ENCODE measurements at regions of chr18 and their contacts with region 1.

Region 1: GRCh38 chr18:80034068-80034851 is at the start of gene RBFA:
- DNase-seq: peak; percentile 100
- ATAC-seq: peak; percentile 98
- H3K4me3 ChIP-seq: peak within 1 kb of the TSS; percentile 83 to 94
- H3K27ac ChIP-seq: peak within 1 kb of the TSS in 1 of 2 donors; percentile 34
- H3K4me1 ChIP-seq: no peaks in the 10 kb centered on the region
- H3K27me3 ChIP-seq: no peaks in the 10 kb centered on the region
- total RNA-seq, gene RBFA: 18.1 to 22.8 TPM

Region 2: GRCh38 chr18:79679111-79679872 is 355.0 kb before region 1 on chr18 and contains the start of gene CTDP1:
- intact Hi-C with region 1: loop called in 1 of 2 experiments (anchors 10 kb)
- DNase-seq: peak; percentile 99 to 100
- ATAC-seq: peak; percentile 99
- H3K4me3 ChIP-seq: peak within 1 kb of the TSS; percentile 84 to 95
- H3K27ac ChIP-seq: peak within 1 kb of the TSS; percentile 87 to 98
- H3K4me1 ChIP-seq: no peaks in the 10 kb centered on the region
- H3K27me3 ChIP-seq: no peaks in the 10 kb centered on the region
- total RNA-seq, gene CTDP1: 18.5 to 19.8 TPM

Region 3: DNA sequence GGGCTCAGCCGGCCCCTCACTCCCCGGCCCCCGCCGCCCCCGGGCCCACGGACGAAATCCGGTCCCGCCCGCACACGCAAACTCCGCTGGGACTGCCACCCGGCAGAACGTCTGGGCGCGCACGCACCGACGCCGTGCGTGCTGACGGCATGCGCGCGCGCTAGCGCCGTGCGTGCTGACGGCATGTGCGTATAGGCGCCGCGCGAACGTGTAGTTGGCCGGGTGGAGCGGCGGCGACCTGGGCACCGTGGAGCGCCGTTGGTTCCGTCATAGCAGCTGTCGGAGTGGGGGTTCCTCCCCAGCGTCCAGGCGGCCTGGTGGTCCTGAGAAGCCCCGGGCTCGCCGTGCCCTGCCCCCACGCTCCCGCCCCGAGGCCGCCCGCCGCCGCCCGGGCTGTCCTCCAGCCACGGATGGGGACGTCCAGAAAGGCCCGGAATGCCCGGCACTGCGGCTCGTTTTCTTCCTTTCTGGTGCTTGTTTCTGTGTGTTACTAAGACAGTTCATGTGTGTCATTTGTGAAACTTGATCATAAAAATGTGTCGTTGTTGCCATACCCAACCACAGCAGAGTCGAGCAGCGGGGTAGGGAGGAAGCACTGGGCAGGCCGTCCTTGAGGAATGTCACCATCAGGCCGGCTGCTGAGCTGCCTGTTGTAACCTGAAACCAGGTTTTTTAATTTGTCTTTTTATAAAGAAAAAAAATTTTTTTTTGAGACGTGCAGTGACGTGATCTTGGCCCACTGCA is 45.6 kb before region 1 on chr18 and contains the start of gene TXNL4A:
- intact Hi-C with region 1: loop called (anchors 1 to 5 kb)
- DNase-seq: peak; percentile 93 to 94
- ATAC-seq: peak; percentile 98
- H3K4me3 ChIP-seq: peak within 1 kb of the TSS; percentile 61 to 69
- H3K27ac ChIP-seq: peak within 1 kb of the TSS; percentile 46 to 87
- H3K4me1 ChIP-seq: no peaks in the 10 kb centered on the region
- H3K27me3 ChIP-seq: no peaks in the 10 kb centered on the region
- total RNA-seq, gene TXNL4A: 71.7 to 72.0 TPM

Region 4: DNA sequence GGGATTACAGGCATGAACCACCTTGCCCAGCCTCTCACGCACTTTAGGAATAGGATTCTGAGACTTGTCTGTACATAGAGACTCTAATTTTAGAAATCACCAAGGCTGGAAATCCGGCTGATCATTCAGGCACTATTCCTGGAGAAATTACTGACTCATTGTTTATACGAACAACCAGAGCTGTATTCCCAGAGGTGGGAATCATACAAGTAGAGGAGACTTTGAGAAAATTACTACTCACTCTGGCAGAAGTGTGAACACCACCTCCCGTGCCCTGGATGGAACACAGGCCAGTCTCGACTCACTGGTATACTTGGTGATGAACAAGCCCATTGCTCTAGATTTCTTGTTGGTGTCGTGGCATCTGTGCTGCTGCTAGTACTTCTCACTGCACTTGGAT is 69.0 kb after region 1 on chr18:
- intact Hi-C with region 1: loop called (anchors 1 to 5 kb)
- DNase-seq: peak in 1 of 2 donors; percentile 66
- ATAC-seq: peak; percentile 59
- H3K4me3 ChIP-seq: no peak overlapping the region
- H3K27ac ChIP-seq: peak overlapping the region in 1 of 2 donors; percentile 30
- H3K4me1 ChIP-seq: peaks cover 0 to 3% of the 10 kb centered on the region in 2 donors
- H3K27me3 ChIP-seq: no peaks in the 10 kb centered on the region

Measured in aorta (tissue), 5 donors.